ENCODE measurements at regions of chrX and their contacts with region 1.

Region 1: DNA sequence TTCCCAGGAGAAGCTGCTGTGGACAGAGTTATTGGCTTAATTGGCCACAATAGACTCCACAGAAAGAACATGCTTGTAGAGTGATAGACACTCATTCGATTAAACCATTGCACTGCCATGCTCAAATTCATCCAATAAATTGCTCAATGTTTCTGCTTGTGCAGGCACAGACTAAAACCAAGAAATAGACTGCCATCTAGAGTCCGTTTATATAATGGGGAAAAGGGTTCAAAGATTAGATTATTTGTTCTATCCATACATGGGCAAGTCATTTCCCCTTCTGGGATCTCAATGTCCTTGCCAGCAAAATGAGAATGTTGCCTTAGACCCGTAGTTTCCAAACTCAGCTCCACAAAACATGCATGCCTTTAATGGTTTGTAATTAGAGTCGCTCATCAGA is 8.7 kb downstream of the SMIM10 start:
- DNase-seq: no peak
- H3K4me3 Mint-ChIP-seq: no peak overlapping the region
- H3K27ac Mint-ChIP-seq: no peak overlapping the region
- H3K4me1 Mint-ChIP-seq: peaks cover 8% of the 10 kb centered on the region
- H3K27me3 Mint-ChIP-seq: no peaks in the 10 kb centered on the region
- CTCF ChIP-seq: peak; percentile 30

Region 2: DNA sequence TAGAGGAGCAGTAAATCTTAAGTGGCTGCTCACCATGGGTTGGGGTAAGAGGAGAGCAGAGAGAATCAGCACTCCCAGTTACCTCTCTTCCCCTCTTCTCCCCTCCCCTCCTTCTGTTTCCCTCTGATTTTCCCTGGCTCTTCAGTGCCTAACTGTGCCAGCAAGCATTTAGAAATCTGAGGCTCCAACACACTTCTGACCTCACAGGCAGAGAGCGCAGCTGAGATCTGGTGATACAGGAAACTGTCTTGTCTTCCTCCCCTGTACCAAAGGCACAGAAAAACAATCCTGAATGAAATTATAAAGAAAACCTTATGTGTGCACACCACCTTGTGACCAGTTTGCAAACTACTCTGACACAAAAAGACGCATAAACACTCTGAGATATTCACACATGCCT is 91.1 kb before region 1 on chrX:
- CTCF ChIA-PET with region 1: no interaction called
- intact Hi-C with region 1: loop called (anchors 2 kb)
- DNase-seq: no peak
- H3K4me3 Mint-ChIP-seq: no peak overlapping the region
- H3K27ac Mint-ChIP-seq: no peak overlapping the region
- H3K4me1 Mint-ChIP-seq: no peaks in the 10 kb centered on the region
- H3K27me3 Mint-ChIP-seq: no peaks in the 10 kb centered on the region
- CTCF ChIP-seq: no peak

Region 3: DNA sequence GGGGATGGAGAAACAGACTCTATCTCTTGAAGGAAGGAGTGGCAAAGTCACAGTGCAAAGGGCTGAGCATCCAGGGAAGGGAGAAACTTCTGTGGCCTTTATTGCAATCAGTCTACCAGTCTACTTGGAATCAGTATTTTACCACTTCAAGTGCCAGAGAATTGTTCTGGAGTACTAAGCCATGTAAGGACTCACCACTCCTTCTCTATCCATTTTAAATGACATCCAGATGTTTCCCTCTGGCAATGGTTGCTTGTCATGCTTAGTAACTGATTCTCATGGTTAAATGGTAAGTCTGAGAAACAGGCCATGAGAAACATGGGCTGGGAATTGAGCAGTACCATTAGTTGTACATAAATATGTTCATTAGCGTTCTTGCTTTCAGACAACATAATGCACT is 29.7 kb before region 1 on chrX:
- CTCF ChIA-PET with region 1: no interaction called
- intact Hi-C with region 1: loop called (anchors 1 kb)
- DNase-seq: no peak
- H3K4me3 Mint-ChIP-seq: no peak overlapping the region
- H3K27ac Mint-ChIP-seq: no peak overlapping the region
- H3K4me1 Mint-ChIP-seq: peaks cover 8% of the 10 kb centered on the region
- H3K27me3 Mint-ChIP-seq: peaks cover 12% of the 10 kb centered on the region
- CTCF ChIP-seq: no peak

Measured in Calu3 (cell line).